K562 (cell line): ENCODE measurements at regions of chr4 and their contacts with region 1.

Region 1: DNA sequence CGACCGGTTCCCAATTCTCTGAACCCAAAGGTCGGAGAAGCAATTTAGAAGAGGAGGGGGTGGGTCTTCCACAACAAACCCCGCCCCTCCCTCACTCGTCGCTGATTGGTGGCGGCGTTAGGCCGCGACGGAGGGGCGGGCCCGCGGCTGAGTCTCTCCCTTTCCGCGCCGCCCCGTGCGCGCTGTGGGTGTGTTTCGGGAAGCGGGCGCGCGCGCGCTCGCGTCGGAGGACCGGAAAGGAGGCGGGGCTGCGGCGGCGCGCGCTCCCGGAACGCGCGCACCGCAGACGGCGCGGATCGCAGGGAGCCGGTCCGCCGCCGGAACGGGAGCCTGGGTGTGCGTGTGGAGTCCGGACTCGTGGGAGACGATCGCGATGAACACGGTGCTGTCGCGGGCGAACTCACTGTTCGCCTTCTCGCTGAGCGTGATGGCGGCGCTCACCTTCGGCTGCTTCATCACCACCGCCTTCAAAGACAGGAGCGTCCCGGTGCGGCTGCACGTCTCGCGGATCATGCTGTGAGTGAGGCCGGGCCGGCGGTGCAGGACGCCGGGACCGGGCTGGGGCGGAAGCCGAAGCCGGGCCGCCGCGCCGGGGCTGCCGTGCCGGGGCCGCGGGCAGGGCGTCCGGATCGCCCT is at the start of gene SPCS3:
- DNase-seq: peak; percentile 95 to 97 (median 96)
- ATAC-seq: peak; percentile 93
- H3K4me3 ChIP-seq: peak within 1 kb of the TSS; percentile 92
- H3K27ac ChIP-seq: peak within 1 kb of the TSS; percentile 97
- H3K4me1 ChIP-seq: peaks cover 0 to 7% of the 10 kb centered on the region in 2 experiments; a peak in 3 of 5 replicates
- H3K27me3 ChIP-seq: no peaks in the 10 kb centered on the region
- CTCF ChIP-seq: no peak
- EP300 ChIP-seq: no peak
- POLR2A ChIP-seq: peak; percentile 91
- RAD21 ChIP-seq: no peak
- polyA plus RNA-seq, gene SPCS3: 71.4 to 80.2 TPM

Region 2: DNA sequence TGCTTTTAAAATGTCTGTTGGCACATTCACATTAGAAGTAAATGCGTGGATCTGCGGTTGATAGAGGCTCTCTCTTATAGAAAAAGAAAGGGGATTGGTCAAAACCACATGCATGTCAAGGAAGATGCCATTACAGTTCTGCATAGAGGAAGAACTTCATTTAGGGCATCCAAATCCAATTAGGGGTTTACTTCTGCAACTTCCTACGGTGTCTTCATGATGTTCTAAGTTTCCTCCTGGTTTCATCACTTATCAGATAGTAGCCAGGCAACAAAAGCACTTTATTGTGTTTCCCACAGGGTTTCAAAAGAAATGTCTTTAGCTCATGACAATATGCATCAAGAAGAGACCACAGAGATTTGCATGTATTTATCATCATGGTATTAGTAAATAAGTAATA is 1661.6 kb before region 1 on chr4:
- CTCF ChIA-PET with region 1: no interaction called
- POLR2A ChIA-PET with region 1: no interaction called
- in situ Hi-C with region 1: no loop called
- intact Hi-C with region 1: loop called (anchors 10 kb)
- DNase-seq: peak in 1 of 4 experiments; percentile 57
- ATAC-seq: peak; percentile 70
- H3K4me3 ChIP-seq: no peak overlapping the region
- H3K27ac ChIP-seq: peak overlapping the region; percentile 68; the same call in 2 of the 3 replicates
- H3K4me1 ChIP-seq: peaks cover 0 to 22% of the 10 kb centered on the region in 2 experiments; a peak in 2 of 5 replicates
- H3K27me3 ChIP-seq: no peaks in the 10 kb centered on the region
- CTCF ChIP-seq: no peak
- EP300 ChIP-seq: peak; percentile 79
- POLR2A ChIP-seq: no peak
- RAD21 ChIP-seq: no peak

Region 3: GRCh38 chr4:176335406-176335805 is 15.6 kb after region 1 on chr4:
- CTCF ChIA-PET with region 1: no interaction called
- POLR2A ChIA-PET with region 1: interaction called, 12 read pairs
- in situ Hi-C with region 1: no loop called
- intact Hi-C with region 1: no loop called
- DNase-seq: no peak
- ATAC-seq: no peak
- H3K4me3 ChIP-seq: no peak overlapping the region
- H3K27ac ChIP-seq: no peak overlapping the region
- H3K4me1 ChIP-seq: no peaks in the 10 kb centered on the region; a peak in 1 of 5 replicates
- H3K27me3 ChIP-seq: no peaks in the 10 kb centered on the region
- CTCF ChIP-seq: no peak
- EP300 ChIP-seq: no peak
- POLR2A ChIP-seq: no peak
- RAD21 ChIP-seq: no peak

Region 4: DNA sequence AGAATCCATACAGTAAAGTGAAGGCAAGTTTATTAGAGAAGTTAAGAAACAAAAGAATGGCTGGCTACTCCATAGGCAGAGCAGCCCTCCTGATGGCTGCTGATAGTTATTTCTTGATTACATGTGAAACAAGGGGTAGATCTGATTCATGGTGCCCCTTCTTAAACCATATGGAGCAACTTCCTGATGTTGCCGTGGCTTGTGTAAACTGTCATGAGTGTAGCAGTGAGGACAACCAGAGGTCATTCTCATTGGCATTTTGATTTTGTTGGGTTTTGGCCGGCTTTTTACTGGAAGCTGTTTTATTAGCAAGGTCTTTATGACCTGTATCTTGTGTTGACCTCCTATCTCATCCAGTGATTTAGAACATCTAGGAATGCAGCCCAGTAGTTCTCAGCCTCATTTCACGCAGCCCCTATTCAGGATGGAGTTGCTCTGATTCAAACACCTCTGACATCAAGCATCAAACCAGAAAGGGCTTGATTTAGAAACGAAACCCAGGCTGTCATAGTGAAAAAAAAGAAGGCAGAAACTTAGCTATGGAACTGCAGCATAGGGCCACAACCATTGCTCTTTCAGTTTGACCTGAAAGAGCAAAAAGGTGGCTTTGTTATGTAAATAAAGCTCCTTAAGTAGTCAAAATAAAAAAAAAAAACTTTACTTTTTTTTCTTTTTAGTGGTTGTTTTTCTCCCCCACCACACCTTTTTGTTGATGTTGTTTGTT is 37.7 kb after region 1 on chr4:
- CTCF ChIA-PET with region 1: no interaction called
- POLR2A ChIA-PET with region 1: no interaction called
- in situ Hi-C with region 1: no loop called
- intact Hi-C with region 1: no loop called
- DNase-seq: no peak
- ATAC-seq: no peak
- H3K4me3 ChIP-seq: no peak overlapping the region
- H3K27ac ChIP-seq: no peak overlapping the region
- H3K4me1 ChIP-seq: no peaks in the 10 kb centered on the region
- H3K27me3 ChIP-seq: no peaks in the 10 kb centered on the region
- CTCF ChIP-seq: no peak
- EP300 ChIP-seq: no peak
- POLR2A ChIP-seq: no peak
- RAD21 ChIP-seq: no peak

Region 5: DNA sequence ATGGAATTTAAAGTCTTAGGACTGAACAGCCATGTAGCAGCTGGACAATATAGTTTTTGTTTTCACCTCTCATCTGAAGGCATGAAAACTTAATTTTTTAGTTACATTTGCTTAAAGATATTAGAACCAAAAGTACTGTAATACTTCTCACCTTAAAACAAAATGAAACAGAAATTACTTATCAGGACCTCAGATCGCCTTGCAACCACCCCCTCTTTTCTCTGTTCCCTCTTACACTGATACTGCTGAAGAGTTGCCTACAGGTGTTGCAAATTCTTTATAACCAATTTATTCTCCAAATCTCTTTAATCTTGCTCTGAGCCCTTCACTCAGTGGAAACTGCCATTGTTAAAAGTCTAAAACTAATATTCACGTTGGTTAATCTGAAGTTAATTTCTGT is 144.9 kb after region 1 on chr4:
- CTCF ChIA-PET with region 1: no interaction called
- POLR2A ChIA-PET with region 1: no interaction called
- in situ Hi-C with region 1: no loop called
- intact Hi-C with region 1: no loop called
- DNase-seq: no peak
- ATAC-seq: no peak
- H3K4me3 ChIP-seq: no peak overlapping the region
- H3K27ac ChIP-seq: no peak overlapping the region
- H3K4me1 ChIP-seq: no peaks in the 10 kb centered on the region
- H3K27me3 ChIP-seq: no peaks in the 10 kb centered on the region
- CTCF ChIP-seq: no peak
- EP300 ChIP-seq: no peak
- POLR2A ChIP-seq: no peak
- RAD21 ChIP-seq: no peak